ENCODE measurements at regions of chr12 and their contacts with region 1.

Region 1: DNA sequence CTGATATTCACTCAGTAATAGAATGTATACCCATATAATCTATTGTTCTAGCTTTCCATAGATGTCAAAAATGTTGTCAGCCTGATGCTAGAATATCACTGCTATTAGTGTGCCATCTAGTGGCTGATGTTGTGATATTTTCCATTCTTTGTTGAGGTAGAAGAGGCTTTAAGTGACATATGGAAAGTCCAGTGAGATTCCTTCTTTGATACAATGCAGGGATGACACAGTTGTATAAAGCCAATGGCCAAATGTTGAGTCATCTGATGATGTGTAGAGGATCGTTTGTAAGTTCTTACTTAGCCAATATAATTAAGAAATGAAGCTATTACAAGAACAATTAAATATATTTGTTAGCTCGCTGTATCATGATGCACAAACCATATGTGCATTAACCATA is 58.1 kb upstream of the PCED1B start:
- DNase-seq: no peak
- ATAC-seq: peak in 1 of 4 donors; percentile 45
- H3K4me3 ChIP-seq: no peak overlapping the region
- H3K27ac ChIP-seq: no peak overlapping the region
- H3K4me1 ChIP-seq: peaks cover 0 to 7% (median 0%) of the 10 kb centered on the region in 12 donors
- H3K27me3 ChIP-seq: peaks cover 0 to 7% (median 0%) of the 10 kb centered on the region in 9 donors
- CTCF ChIP-seq: peak; percentile 45 to 81 (median 64)
- POLR2A ChIP-seq: no peak

Region 2: GRCh38 chr12:46071769-46072624 is 949.3 kb before region 1 on chr12:
- intact Hi-C with region 1: loop called in 1 of 10 experiments (anchors 5 kb)
- DNase-seq: peak; percentile 56 to 73 (median 61)
- ATAC-seq: peak; percentile 84 to 96 (median 88)
- H3K4me3 ChIP-seq: no peak overlapping the region
- H3K27ac ChIP-seq: no peak overlapping the region
- H3K4me1 ChIP-seq: peaks cover 0 to 11% (median 1%) of the 10 kb centered on the region in 12 donors
- H3K27me3 ChIP-seq: no peaks in the 10 kb centered on the region
- CTCF ChIP-seq: peak; percentile 73 to 95 (median 82)
- POLR2A ChIP-seq: no peak

Region 3: DNA sequence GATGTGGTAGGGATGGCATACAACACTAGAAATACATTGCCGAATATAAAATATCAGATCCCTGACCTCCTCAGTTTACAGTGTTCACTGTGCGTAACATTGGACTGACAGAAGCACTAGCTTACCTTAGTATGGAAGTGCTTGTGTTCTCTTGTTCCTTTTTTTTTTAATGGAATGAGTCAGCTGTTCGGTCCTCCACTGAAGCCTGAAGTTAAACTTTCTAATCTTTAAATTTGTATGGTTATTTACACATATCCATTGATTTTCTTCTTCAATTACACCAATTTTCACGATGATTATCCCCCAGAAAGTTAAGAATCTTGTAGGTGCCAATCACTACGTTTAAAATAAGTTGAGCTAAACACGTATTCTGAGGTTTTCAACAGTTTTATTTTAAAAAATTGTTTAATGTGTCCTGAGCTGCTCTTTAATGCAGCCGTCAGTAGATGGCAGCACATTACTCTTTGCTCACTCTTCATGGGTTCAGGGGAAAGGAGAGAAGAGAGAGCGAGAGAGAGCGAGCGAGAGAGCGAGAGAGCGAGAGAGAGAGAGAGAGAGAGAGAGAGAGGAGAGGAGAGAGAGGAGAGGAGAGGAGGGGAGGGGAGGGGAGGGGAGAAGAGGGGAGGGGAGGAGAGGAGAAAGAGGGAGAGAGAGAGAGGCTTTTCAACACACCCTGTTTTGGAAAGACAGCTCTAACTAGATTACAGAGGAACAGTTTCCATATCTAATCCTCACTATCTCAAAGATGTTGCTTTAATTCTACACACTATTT is 896.3 kb before region 1 on chr12:
- intact Hi-C with region 1: loop called in 3 of 10 experiments (anchors 10 kb)
- DNase-seq: peak in 3 of 5 donors; percentile 35 to 44 (median 36)
- ATAC-seq: peak; percentile 85 to 92 (median 91)
- H3K4me3 ChIP-seq: peak overlapping the region in 3 of 12 donors; percentile 22 to 38 (median 25)
- H3K27ac ChIP-seq: peak overlapping the region in 1 of 12 donors; percentile 27
- H3K4me1 ChIP-seq: peaks cover 0 to 14% (median 2%) of the 10 kb centered on the region in 12 donors
- H3K27me3 ChIP-seq: peaks cover 0 to 5% (median 0%) of the 10 kb centered on the region in 9 donors
- CTCF ChIP-seq: peak; percentile 23 to 77 (median 60)
- POLR2A ChIP-seq: no peak

Region 4: GRCh38 chr12:46342562-46343033 is 678.7 kb before region 1 on chr12:
- intact Hi-C with region 1: loop called in 7 of 10 experiments (anchors 2 to 10 kb)
- DNase-seq: peak in 2 of 5 donors; percentile 14 to 31
- ATAC-seq: peak in 3 of 4 donors; percentile 75 to 83 (median 78)
- H3K4me3 ChIP-seq: no peak overlapping the region
- H3K27ac ChIP-seq: no peak overlapping the region
- H3K4me1 ChIP-seq: peaks cover 0 to 6% (median 0%) of the 10 kb centered on the region in 12 donors
- H3K27me3 ChIP-seq: no peaks in the 10 kb centered on the region
- CTCF ChIP-seq: peak; percentile 50 to 81 (median 70)
- POLR2A ChIP-seq: no peak

Region 5: GRCh38 chr12:47194501-47194900 is 173.2 kb after region 1 on chr12:
- intact Hi-C with region 1: no loop called
- DNase-seq: no peak
- ATAC-seq: peak; percentile 64 to 92 (median 88)
- H3K4me3 ChIP-seq: no peak overlapping the region
- H3K27ac ChIP-seq: peak overlapping the region in 2 of 12 donors; percentile 56 to 68
- H3K4me1 ChIP-seq: peaks cover 0 to 53% (median 10%) of the 10 kb centered on the region in 12 donors
- H3K27me3 ChIP-seq: no peaks in the 10 kb centered on the region
- CTCF ChIP-seq: no peak
- POLR2A ChIP-seq: no peak

Measured in heart left ventricle (tissue), 16 donors.